IMR-90 (cell line): ENCODE measurements at regions of chr7 and their contacts with region 1.

Region 1: DNA sequence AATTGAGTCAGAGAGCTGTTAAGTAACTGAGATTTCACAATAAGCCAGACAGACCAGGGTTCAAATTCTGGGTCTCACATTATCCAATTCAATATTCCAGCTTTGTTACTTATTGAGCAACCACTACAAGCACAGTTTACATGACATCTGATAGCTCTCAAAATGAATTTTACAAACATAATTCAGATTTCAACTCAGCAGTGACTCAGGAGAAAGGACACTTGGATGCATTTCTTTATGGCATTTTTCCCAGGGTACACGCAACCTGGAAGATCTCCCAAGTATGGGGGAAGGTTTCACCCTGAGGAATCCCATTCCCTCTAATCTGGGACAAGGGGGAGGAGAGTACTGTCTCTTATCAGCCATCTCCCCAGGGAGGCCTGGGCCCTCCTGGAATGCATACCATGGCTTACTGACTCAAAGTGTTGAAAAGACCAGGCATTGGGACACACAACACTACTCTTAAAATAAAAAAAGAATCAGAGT is 102.4 kb downstream of the CFTR start:
- DNase-seq: peak; percentile 98
- ATAC-seq: peak; percentile 99
- H3K4me3 ChIP-seq: no peak overlapping the region
- H3K27ac ChIP-seq: peak overlapping the region; percentile 30; the same call in 1 of the 2 replicates
- H3K4me1 ChIP-seq: peaks cover 2% of the 10 kb centered on the region; the same call in 1 of the 2 replicates
- H3K27me3 ChIP-seq: no peaks in the 10 kb centered on the region
- CTCF ChIP-seq: no peak
- POLR2A ChIP-seq: no peak
- RAD21 ChIP-seq: no peak

Region 2: GRCh38 chr7:117552660-117553059 is 29.6 kb before region 1 on chr7:
- CTCF ChIA-PET with region 1: no interaction called
- POLR2A ChIA-PET with region 1: no interaction called
- dilution Hi-C with region 1: no loop called
- in situ Hi-C with region 1: no loop called
- intact Hi-C with region 1: loop called (anchors 2 kb)
- DNase-seq: no peak
- ATAC-seq: no peak
- H3K4me3 ChIP-seq: no peak overlapping the region
- H3K27ac ChIP-seq: no peak overlapping the region
- H3K4me1 ChIP-seq: no peaks in the 10 kb centered on the region
- H3K27me3 ChIP-seq: no peaks in the 10 kb centered on the region
- CTCF ChIP-seq: no peak
- POLR2A ChIP-seq: no peak
- RAD21 ChIP-seq: no peak

Region 3: GRCh38 chr7:117645456-117646181 is 63.4 kb after region 1 on chr7:
- CTCF ChIA-PET with region 1: no interaction called
- POLR2A ChIA-PET with region 1: no interaction called
- dilution Hi-C with region 1: no loop called
- in situ Hi-C with region 1: no loop called
- intact Hi-C with region 1: loop called (anchors 5 kb)
- DNase-seq: peak; percentile 91
- ATAC-seq: peak; percentile 90
- H3K4me3 ChIP-seq: no peak overlapping the region
- H3K27ac ChIP-seq: peak overlapping the region; percentile 53; the same call in 1 of the 2 replicates
- H3K4me1 ChIP-seq: 0 out of 2 replicates have a peak, but pooled peaks cover 2% of the 10 kb centered on the region
- H3K27me3 ChIP-seq: no peaks in the 10 kb centered on the region
- CTCF ChIP-seq: no peak
- POLR2A ChIP-seq: no peak
- RAD21 ChIP-seq: no peak

Region 4: GRCh38 chr7:117673839-117674238 is 91.6 kb after region 1 on chr7:
- CTCF ChIA-PET with region 1: no interaction called
- POLR2A ChIA-PET with region 1: no interaction called
- dilution Hi-C with region 1: no loop called
- in situ Hi-C with region 1: no loop called
- intact Hi-C with region 1: loop called (anchors 2 kb)
- DNase-seq: peak; percentile 67
- ATAC-seq: peak; percentile 73
- H3K4me3 ChIP-seq: no peak overlapping the region
- H3K27ac ChIP-seq: no peak overlapping the region
- H3K4me1 ChIP-seq: peaks cover 11% of the 10 kb centered on the region; the same call in 1 of the 2 replicates
- H3K27me3 ChIP-seq: peaks cover 2% of the 10 kb centered on the region; the same call in 1 of the 2 replicates
- CTCF ChIP-seq: peak; percentile 57
- POLR2A ChIP-seq: no peak
- RAD21 ChIP-seq: peak; percentile 51